ENCODE measurements at regions of chr9 and their contacts with region 1.

Region 1: GRCh38 chr9:4497855-4498254 is 7.6 kb downstream of the SLC1A1 start:
- DNase-seq: peak; percentile 59
- ATAC-seq: peak; percentile 82
- H3K4me3 ChIP-seq: no peak overlapping the region
- H3K27ac ChIP-seq: no peak overlapping the region
- H3K4me1 ChIP-seq: peaks cover 10% of the 10 kb centered on the region; the same call in 1 of the 2 replicates
- H3K27me3 ChIP-seq: no peaks in the 10 kb centered on the region
- CTCF ChIP-seq: no peak

Region 2: DNA sequence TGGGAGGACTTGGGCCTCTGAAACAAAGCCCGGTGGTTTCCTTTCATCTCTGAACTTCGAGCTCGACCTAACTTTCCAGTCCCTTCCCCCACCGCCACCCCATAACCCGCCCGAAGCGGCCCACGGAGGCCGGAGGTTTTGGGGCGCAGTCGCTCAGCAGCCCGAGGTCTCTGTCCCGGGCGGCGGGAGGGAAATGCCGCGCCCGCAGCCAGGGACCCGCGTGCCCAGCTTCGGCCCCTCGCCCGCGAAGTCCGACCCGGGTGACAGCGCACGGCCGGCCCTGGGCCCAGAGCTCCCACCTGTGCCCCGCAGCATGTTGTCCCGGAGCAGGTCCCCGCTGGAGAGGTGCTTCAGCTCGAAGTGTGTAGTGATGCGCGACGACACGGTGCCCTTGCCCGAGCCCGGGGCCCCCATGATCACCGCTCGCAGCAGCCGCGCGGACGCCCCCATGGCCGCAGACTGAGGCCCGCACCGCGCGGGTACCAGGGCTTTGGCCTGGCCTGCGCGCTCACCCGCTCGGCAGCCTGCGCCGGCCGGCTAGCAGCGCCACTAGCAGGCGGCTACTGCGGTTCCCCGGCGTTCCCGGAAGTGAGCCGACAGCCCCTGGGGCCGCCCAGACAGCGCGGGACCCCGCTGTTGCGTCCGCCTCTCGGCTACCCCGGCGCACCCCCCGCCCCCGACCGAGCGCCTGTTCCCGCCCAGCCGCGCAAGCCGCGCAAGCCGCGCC is 242.9 kb after region 1 on chr9 and contains the start of gene AK3:
- CTCF ChIA-PET with region 1: interaction called, 12 read pairs
- POLR2A ChIA-PET with region 1: no interaction called
- intact Hi-C with region 1: no loop called
- DNase-seq: peak; percentile 72
- ATAC-seq: peak; percentile 87
- H3K4me3 ChIP-seq: peak within 1 kb of the TSS; percentile 96
- H3K27ac ChIP-seq: peak within 1 kb of the TSS; percentile 56
- H3K4me1 ChIP-seq: peaks cover 15% of the 10 kb centered on the region; the same call in 1 of the 2 replicates
- H3K27me3 ChIP-seq: no peaks in the 10 kb centered on the region
- CTCF ChIP-seq: no peak
- total RNA-seq, gene AK3: 42.2 and 79.2 TPM in 2 replicates

Measured in PC-3 (cell line).